ENCODE measurements at regions of chr10 and their contacts with region 1.

Region 1: GRCh38 chr10:50152792-50153272 is 85.1 kb downstream of the WASHC2A start:
- DNase-seq: no peak
- H3K4me3 ChIP-seq: no peak overlapping the region
- H3K4me3 Mint-ChIP-seq: peak overlapping the region in 1 of 2 donors; percentile 71
- H3K27ac ChIP-seq: no peak overlapping the region
- H3K27ac Mint-ChIP-seq: no peak overlapping the region
- H3K4me1 ChIP-seq: no peaks in the 10 kb centered on the region
- H3K4me1 Mint-ChIP-seq: peaks cover 5% of the 10 kb centered on the region
- H3K27me3 ChIP-seq: peaks cover 0 to 6% of the 10 kb centered on the region in 2 donors
- H3K27me3 Mint-ChIP-seq: peaks cover 13 to 23% (median 21%) of the 10 kb centered on the region in 3 donors
- CTCF ChIP-seq: no peak

Region 2: DNA sequence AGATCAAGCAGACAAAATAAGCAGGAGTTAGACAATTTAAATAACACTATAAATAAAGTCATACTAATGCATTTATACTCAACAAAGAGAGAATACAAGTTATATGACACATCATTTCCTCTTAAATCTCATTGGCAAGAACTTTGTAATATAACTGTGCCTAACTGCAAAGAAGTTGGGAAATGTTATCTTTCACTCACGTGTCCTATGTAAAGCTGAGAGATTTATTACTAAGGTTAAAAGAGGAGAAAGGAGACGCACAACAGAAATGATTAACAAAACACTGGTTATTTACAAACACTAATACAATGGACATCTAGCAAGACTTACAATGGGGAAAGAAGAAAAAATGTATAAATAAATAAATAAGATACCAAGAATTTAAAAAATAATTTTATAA is 952.0 kb before region 1 on chr10:
- intact Hi-C with region 1: no loop called
- DNase-seq: peak in 2 of 3 donors; percentile 36 to 43
- H3K4me3 ChIP-seq: no peak overlapping the region
- H3K4me3 Mint-ChIP-seq: no peak overlapping the region
- H3K27ac ChIP-seq: no peak overlapping the region
- H3K27ac Mint-ChIP-seq: no peak overlapping the region
- H3K4me1 ChIP-seq: no peaks in the 10 kb centered on the region
- H3K4me1 Mint-ChIP-seq: peaks cover 2% of the 10 kb centered on the region
- H3K27me3 ChIP-seq: no peaks in the 10 kb centered on the region
- H3K27me3 Mint-ChIP-seq: peaks cover 6 to 13% (median 7%) of the 10 kb centered on the region in 3 donors
- CTCF ChIP-seq: no peak

Region 3: GRCh38 chr10:49711516-49711915 is 441.3 kb before region 1 on chr10:
- intact Hi-C with region 1: no loop called
- DNase-seq: no peak
- H3K4me3 ChIP-seq: no peak overlapping the region
- H3K4me3 Mint-ChIP-seq: no peak overlapping the region
- H3K27ac ChIP-seq: no peak overlapping the region
- H3K27ac Mint-ChIP-seq: no peak overlapping the region
- H3K4me1 ChIP-seq: no peaks in the 10 kb centered on the region
- H3K4me1 Mint-ChIP-seq: no peaks in the 10 kb centered on the region
- H3K27me3 ChIP-seq: no peaks in the 10 kb centered on the region
- H3K27me3 Mint-ChIP-seq: peaks cover 2 to 11% (median 3%) of the 10 kb centered on the region in 3 donors
- CTCF ChIP-seq: no peak

Region 4: DNA sequence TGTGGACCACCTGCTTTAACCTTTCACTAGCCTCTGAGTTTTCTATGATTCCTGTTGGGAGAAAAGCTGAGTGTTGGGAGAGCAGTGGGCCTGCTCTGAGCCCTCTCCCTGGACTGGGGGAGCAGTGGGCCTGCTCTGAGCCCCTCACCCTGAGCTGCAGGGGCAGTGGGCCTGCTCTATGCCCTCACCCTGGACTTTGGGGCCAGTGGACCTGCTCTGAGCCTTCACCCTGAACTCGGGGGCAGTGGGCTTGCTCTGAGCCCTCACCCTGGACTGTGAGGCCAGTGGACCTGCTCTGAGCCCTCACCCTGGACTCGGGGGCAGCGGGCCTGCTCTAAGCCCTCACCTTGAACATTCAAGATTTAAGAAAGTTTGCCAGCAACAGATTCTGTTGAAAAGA is 131.2 kb before region 1 on chr10:
- intact Hi-C with region 1: loop called in 1 of 2 experiments (anchors 10 kb)
- DNase-seq: no peak
- H3K4me3 ChIP-seq: no peak overlapping the region
- H3K4me3 Mint-ChIP-seq: no peak overlapping the region
- H3K27ac ChIP-seq: no peak overlapping the region
- H3K27ac Mint-ChIP-seq: no peak overlapping the region
- H3K4me1 ChIP-seq: no peaks in the 10 kb centered on the region
- H3K4me1 Mint-ChIP-seq: no peaks in the 10 kb centered on the region
- H3K27me3 ChIP-seq: peaks cover 0 to 19% of the 10 kb centered on the region in 2 donors
- H3K27me3 Mint-ChIP-seq: peaks cover 26 to 34% (median 29%) of the 10 kb centered on the region in 3 donors
- CTCF ChIP-seq: no peak